ENCODE measurements at regions of chr17 and their contacts with region 1.

Region 1: DNA sequence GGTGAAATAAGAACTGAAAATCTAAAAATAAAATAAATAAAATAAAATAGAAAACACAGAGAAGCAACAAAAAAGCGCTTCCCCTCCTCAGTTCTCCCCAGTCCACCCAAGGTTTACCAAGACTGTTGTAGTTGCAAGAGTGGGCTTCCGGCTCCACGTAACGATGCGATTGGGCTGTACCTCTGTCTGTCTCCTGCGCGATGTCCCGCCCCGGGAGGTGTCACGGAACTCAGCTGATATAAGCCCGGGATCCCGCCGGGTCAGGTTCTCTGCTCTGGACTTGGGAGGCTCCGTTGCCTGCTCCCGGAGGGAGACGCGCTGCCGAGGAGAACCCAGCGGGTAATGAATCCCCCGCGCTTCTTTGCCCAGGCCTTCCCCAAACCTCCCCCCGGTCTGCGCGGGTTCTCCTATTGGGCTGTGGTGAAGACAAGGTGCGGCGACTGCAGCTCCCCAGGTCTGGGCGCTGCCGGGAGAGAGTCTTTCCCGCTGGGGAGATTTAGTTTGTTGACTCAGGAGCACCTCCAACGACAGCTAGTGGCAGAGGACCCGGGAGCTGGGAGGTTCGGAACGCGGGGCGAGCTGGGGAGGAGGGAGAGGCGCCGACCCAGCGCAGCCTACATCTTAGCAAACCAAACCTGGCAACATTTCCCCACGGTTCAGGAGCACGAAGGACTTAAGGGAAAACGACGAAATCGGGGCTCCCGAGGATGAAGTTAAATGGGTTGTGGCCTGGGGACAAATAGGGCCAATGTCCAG is at the start of gene SLFN5:
- DNase-seq: peak; percentile 95
- ATAC-seq: peak; percentile 68
- H3K4me3 Mint-ChIP-seq: peak within 1 kb of the TSS; percentile 82
- H3K27ac Mint-ChIP-seq: peak within 1 kb of the TSS; percentile 94
- H3K4me1 Mint-ChIP-seq: peaks cover 72% of the 10 kb centered on the region
- H3K27me3 Mint-ChIP-seq: no peaks in the 10 kb centered on the region
- total RNA-seq, gene SLFN5: 28.8 to 29.8 TPM

Region 2: DNA sequence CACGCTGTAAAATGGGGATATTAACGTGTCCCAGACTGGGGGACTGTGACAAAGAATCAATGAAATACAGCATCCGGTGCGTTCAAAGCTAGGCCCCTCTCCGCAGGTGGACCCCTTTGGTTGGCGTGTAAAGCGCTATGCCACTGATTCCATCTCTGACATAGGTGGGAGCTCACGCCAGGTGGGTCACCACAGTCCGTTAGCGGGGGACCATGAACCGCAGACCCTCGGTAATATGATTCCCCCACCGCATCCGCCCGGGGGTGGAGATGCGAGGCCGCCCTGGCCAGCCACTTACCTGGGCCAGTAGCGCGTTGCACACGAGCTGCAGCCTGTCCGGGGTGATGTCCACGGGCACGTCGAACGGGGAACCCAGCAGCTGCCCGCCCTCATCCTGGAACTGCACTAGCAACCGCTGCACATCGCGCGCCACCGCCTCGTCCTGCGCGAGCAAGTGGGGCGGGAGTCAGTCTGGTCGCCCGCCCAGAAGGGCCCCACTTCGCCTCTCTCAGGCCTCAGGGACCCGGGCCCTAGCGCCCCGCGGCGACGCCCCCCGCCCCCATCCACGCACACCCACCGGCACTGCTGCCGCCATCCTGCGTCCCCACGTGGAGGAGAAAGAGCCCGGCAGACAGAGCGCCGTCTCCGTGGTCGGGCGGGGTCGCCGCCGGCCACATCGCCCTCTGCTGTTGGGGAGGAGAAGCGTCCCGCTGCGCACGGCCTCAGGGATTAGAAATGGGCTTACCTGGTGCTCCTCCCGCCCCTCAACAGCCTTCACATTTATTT is 101.1 kb before region 1 on chr17 and contains the start of gene NLE1:
- CTCF ChIA-PET with region 1: interaction called, 5 read pairs
- POLR2A ChIA-PET with region 1: interaction called, 4 read pairs
- intact Hi-C with region 1: loop called in 1 of 2 experiments (anchors 1 kb)
- DNase-seq: peak; percentile 94
- ATAC-seq: peak; percentile 93
- H3K4me3 Mint-ChIP-seq: peak within 1 kb of the TSS; percentile 80
- H3K27ac Mint-ChIP-seq: peak within 1 kb of the TSS; percentile 81
- H3K4me1 Mint-ChIP-seq: peaks cover 14% of the 10 kb centered on the region
- H3K27me3 Mint-ChIP-seq: no peaks in the 10 kb centered on the region
- total RNA-seq, gene NLE1: 38.1 to 40.6 TPM

Region 3: DNA sequence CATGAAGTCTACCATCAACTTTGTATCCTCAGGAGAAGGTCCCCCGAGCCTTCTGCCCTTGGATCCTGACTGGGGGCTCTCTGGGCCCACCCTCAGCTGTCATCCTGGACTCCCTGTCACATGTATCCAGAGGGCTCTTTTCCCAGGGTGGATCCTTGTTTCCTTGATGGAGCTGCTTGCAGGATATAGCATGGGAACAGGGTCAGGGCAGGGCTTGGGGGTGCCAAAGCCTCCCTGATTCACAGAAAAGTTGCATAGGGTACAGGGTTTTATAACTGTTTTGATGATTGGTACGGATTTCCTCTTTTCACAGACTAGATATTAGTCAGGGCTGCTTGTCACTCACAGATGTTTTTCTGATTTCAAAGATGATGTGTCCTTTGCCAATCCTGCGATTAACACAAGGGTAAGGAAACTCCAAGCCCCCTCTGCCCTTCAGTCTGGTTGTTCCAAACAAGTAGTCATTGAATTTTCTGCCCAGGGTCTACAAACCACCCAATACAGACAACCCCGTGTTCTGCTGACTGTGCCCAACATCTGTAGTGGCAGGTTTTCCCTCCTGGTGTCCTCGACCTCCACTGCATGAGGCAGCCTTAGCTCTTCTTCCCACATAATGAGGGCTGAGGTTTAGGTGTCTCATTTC is 28.2 kb before region 1 on chr17:
- CTCF ChIA-PET with region 1: interaction called, 8 read pairs
- POLR2A ChIA-PET with region 1: interaction called, 11 read pairs
- intact Hi-C with region 1: loop called (anchors 1 kb)
- DNase-seq: peak; percentile 54
- ATAC-seq: peak; percentile 67
- H3K4me3 Mint-ChIP-seq: peak overlapping the region; percentile 49
- H3K27ac Mint-ChIP-seq: peak overlapping the region; percentile 80
- H3K4me1 Mint-ChIP-seq: peaks cover 85% of the 10 kb centered on the region
- H3K27me3 Mint-ChIP-seq: no peaks in the 10 kb centered on the region

Region 4: GRCh38 chr17:35291802-35292201 is 48.8 kb after region 1 on chr17:
- CTCF ChIA-PET with region 1: no interaction called
- POLR2A ChIA-PET with region 1: interaction called, 6 read pairs
- intact Hi-C with region 1: loop called in 1 of 2 experiments (anchors 1 kb)
- DNase-seq: no peak
- ATAC-seq: peak; percentile 53
- H3K4me3 Mint-ChIP-seq: no peak overlapping the region
- H3K27ac Mint-ChIP-seq: no peak overlapping the region
- H3K4me1 Mint-ChIP-seq: peaks cover 20% of the 10 kb centered on the region
- H3K27me3 Mint-ChIP-seq: no peaks in the 10 kb centered on the region

Region 5: DNA sequence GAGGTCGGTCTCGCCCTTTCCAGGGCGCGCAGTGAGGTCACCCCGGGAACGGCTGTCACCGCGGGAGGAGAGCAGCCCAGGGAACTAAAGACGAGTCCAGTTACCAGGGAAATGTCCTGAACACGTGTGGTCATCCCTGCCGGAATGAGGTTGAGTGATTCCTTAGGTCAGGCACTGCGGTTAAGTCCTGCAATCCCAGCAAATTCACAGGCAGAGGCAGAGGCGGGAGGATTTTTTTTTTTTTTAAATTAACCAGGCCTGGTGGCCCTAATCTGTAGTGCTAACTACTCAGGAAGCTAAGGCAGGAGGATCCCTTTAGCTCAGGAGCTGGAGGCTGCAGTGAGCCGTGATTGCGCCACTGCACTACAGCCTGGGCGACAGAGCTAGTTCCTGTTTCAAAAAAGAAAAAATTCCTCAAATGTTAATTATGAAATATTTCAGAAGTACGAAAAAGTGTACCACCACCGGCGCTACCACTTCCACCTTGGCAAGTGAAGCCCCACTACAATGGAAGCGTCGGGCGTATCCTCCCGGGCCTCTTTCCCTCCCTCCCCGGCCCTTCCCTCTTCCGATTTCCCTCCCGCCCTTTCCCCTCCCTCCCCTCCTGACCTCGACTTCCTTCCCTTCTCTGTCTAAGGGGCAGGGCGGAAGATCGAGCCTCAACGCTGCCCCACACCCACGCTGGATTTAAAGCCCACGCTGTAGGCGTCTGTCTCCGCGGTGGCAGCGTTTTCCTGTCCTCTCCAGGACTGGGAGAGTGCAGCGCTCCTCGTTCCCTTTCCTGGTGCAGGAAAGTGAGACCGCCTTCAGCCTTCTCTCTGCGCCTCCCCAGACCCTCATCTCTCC is 103.2 kb after region 1 on chr17:
- CTCF ChIA-PET with region 1: no interaction called
- POLR2A ChIA-PET with region 1: no interaction called
- intact Hi-C with region 1: no loop called
- DNase-seq: peak; percentile 40
- ATAC-seq: peak; percentile 70
- H3K4me3 Mint-ChIP-seq: peak overlapping the region; percentile 73
- H3K27ac Mint-ChIP-seq: peak overlapping the region; percentile 71
- H3K4me1 Mint-ChIP-seq: peaks cover 27% of the 10 kb centered on the region
- H3K27me3 Mint-ChIP-seq: peaks cover 2% of the 10 kb centered on the region

Region 6: DNA sequence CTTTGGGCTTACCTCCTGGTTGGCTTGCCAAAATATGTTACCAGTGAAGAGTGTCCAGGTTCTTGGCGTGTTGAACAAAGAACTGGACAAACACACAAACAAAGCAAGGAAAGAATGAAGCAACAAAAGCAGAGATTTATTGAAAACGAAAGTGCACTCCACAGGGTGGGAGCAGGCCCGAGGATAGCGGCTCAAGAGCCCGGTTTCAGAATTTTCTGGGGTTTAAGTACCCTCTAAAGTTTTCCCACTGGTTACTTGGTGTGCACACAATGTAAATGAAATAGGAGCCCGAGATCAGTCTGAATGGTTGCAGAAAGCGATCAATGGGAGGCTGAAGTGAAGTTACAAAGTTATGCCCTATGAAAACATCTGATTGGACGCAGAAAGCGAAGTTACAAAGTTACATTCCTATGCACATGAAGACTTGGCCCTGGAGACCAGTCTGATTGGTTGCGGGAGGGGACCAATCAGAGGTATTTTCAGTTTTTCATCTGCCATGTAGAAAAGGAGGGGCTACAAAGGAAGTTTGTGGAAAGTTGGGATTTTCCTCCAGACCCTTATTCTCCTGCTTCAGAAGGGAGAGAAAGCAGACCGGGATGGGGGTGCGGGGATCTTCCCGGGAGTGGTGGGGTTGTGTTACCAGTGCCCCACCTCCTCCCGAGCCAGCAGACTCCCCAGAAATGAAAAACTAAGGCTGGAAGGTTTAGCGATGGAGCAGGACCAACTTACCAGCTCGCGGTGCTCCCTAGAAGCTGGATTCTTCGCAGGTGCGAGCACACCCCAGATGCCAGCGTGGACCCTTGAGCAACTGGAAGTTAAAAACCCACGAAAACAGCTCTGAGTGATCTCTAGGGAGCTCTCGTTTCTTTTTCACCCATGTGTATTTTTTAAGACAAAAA is 189.4 kb after region 1 on chr17 and contains the start of gene SLFN12:
- CTCF ChIA-PET with region 1: no interaction called
- POLR2A ChIA-PET with region 1: interaction called, 3 read pairs
- intact Hi-C with region 1: loop called in 1 of 2 experiments (anchors 1 kb)
- DNase-seq: peak; percentile 63
- ATAC-seq: peak; percentile 83
- H3K4me3 Mint-ChIP-seq: peak within 1 kb of the TSS; percentile 90
- H3K27ac Mint-ChIP-seq: peak within 1 kb of the TSS; percentile 98
- H3K4me1 Mint-ChIP-seq: peaks cover 40% of the 10 kb centered on the region
- H3K27me3 Mint-ChIP-seq: no peaks in the 10 kb centered on the region
- total RNA-seq, gene SLFN12: 5.4 TPM

Region 7: DNA sequence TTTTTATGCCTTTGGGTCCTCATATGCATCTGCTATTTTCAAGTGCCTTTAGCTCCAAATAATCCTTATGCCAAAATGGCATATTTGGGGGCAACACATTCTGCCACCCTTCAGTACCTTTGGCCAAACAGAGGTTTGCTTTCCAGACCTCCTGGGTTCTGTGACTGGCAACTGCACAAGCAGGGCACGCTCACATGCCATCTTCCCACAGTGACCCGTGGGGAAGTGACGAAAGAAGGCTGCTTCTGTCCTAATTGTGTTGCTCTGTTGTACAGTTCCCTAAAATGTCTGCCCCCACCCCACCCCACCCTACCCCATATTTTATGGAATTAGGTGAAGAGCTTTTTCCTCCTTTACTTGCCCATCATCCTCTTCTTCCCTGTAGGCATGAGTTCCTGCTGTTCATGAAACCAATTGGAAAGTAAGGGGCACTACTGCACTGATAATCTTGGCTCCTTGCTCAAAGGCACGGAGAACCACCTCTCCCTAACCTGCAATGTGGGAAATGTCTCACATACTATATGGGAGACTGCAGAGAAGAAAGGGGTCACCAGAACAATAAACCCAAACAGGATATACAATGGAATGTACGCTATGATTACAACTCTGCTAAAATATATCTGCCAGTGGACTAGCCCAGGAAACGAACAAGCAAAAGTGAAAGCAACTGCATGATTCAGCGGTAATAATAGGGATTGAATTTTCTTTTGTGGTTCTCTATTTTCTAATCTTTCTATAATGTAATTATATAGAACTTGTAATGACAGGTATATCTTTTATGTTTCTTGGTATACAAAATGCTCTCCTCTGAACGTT is 297.8 kb after region 1 on chr17:
- CTCF ChIA-PET with region 1: interaction called, 6 read pairs
- POLR2A ChIA-PET with region 1: interaction called, 12 read pairs
- intact Hi-C with region 1: loop called (anchors 1 to 2 kb)
- DNase-seq: peak; percentile 62
- ATAC-seq: no peak
- H3K4me3 Mint-ChIP-seq: peak overlapping the region; percentile 78
- H3K27ac Mint-ChIP-seq: peak overlapping the region; percentile 100
- H3K4me1 Mint-ChIP-seq: peaks cover 48% of the 10 kb centered on the region
- H3K27me3 Mint-ChIP-seq: no peaks in the 10 kb centered on the region

Region 8: GRCh38 chr17:35808962-35809854 is 566.2 kb after region 1 on chr17 and contains the start of gene TAF15:
- CTCF ChIA-PET with region 1: no interaction called
- POLR2A ChIA-PET with region 1: no interaction called
- intact Hi-C with region 1: loop called (anchors 1 to 2 kb)
- DNase-seq: peak; percentile 98
- ATAC-seq: peak; percentile 88
- H3K4me3 Mint-ChIP-seq: peak within 1 kb of the TSS; percentile 78
- H3K27ac Mint-ChIP-seq: peak within 1 kb of the TSS; percentile 97
- H3K4me1 Mint-ChIP-seq: peaks cover 57% of the 10 kb centered on the region
- H3K27me3 Mint-ChIP-seq: no peaks in the 10 kb centered on the region
- total RNA-seq, gene TAF15: 316 to 330 TPM